GM12878 (cell line): ENCODE measurements at regions of chr1 and their contacts with region 1.

Region 1: DNA sequence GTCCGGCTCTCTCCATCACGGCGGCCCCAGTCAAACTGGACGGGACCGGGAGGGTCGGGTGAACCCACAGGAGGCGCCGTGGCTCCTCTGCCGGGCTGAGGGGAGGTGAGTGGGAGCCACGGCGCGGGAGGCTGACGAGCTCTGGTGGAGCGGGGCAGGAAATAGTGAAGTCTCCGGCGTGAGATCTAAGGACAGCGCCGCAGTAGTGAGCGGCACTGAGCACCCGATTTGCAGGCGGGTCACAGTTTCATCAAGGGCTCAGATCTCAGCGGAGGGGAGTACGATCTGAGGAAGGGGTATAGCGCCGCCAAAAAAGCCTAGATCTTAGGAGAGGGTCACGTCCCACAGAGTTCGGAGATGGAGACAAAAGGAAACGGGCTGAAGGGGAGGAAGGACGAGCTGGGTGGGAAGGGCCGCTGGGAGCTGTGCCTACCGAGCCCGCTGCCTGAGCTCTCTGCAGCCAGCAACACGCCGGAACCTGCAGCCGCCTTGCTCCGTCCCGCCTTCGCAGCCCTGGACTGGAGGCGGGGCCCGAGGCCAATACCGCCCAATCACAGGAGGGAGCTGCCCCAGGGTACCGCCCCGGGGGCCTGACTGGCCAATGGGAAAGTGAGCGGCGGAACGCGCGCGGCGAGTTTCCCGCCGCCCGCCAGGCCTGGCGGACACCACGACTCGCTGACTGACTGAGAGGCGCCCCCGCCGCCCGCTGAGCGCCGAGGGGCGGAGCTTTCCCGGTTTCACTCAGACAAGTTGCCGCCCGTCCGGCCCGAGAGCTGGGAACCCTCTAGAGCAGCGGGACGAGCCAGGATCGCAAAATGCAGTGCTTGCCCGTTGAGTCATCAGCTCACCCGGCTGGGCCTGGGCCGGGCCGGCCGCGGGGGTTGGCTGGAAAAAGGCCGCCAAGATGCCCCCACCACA is 1.9 kb downstream of the SFN start:
- DNase-seq: peak; percentile 91
- ATAC-seq: peak; percentile 96
- H3K4me3 ChIP-seq: peak overlapping the region; percentile 93
- H3K27ac ChIP-seq: peak overlapping the region; percentile 99
- H3K4me1 ChIP-seq: peaks cover 16% of the 10 kb centered on the region
- H3K27me3 ChIP-seq: no peaks in the 10 kb centered on the region
- CTCF ChIP-seq: no peak
- EP300 ChIP-seq: 0 out of 4 replicates have a peak, but pooled peaks of 1 of the 2 experiments have one; percentile 18
- POLR2A ChIP-seq: peak; percentile 98
- RAD21 ChIP-seq: no peak

Region 2: GRCh38 chr1:26391450-26391849 is 473.4 kb before region 1 on chr1:
- CTCF ChIA-PET with region 1: no interaction called
- POLR2A ChIA-PET with region 1: no interaction called
- RAD21 ChIA-PET with region 1: no interaction called
- SMC1A ChIA-PET with region 1: no interaction called
- in situ Hi-C with region 1: no loop called
- intact Hi-C with region 1: no loop called
- DNase-seq: no peak
- ATAC-seq: peak; percentile 80
- H3K4me3 ChIP-seq: no peak overlapping the region
- H3K27ac ChIP-seq: no peak overlapping the region
- H3K4me1 ChIP-seq: no peaks in the 10 kb centered on the region
- H3K27me3 ChIP-seq: no peaks in the 10 kb centered on the region; a peak in 1 of 4 replicates
- CTCF ChIP-seq: peak; percentile 47 to 62 (median 54)
- EP300 ChIP-seq: no peak
- POLR2A ChIP-seq: no peak
- RAD21 ChIP-seq: peak; percentile 57

Region 3: GRCh38 chr1:26826261-26827105 is 38.4 kb before region 1 on chr1 and contains the start of gene ZDHHC18:
- CTCF ChIA-PET with region 1: interaction called, 36 read pairs
- POLR2A ChIA-PET with region 1: interaction called, 56 read pairs
- RAD21 ChIA-PET with region 1: interaction called, 17 read pairs
- SMC1A ChIA-PET with region 1: interaction called, 15 read pairs
- in situ Hi-C with region 1: no loop called
- intact Hi-C with region 1: loop called (anchors 5 kb)
- DNase-seq: no peak
- ATAC-seq: peak; percentile 78
- H3K4me3 ChIP-seq: peak within 1 kb of the TSS; percentile 86
- H3K27ac ChIP-seq: peak within 1 kb of the TSS; percentile 81
- H3K4me1 ChIP-seq: peaks cover 18% of the 10 kb centered on the region
- H3K27me3 ChIP-seq: no peaks in the 10 kb centered on the region
- CTCF ChIP-seq: peak; percentile 31 to 64 (median 54); a peak in 5 of 6 replicates
- EP300 ChIP-seq: no peak
- POLR2A ChIP-seq: peak; percentile 70
- RAD21 ChIP-seq: peak; percentile 18; the same call in 1 of the 2 replicates
- polyA plus RNA-seq, gene ZDHHC18: 0.40 to 1.2 TPM

Region 4: DNA sequence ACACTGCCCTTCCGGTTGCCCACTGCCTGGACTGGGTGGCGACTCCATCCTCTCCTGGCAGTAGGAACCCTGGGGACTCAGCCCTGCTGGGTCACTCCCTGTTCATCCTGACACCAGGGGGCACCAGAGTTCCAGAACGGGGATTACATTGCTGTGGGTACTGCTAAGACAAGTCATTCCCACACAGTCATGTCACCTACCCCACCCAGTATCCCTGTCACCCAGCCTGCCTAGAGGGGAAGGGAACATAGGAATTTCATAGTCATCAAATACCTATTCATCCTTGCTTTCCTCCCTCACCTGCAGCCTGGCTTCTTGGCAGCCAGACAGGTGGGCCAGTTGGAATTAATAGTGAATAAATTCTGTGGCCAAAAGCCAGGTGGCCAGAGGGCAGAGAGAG is 11.7 kb before region 1 on chr1:
- CTCF ChIA-PET with region 1: interaction called, 11 read pairs
- POLR2A ChIA-PET with region 1: interaction called, 6 read pairs
- RAD21 ChIA-PET with region 1: interaction called, 7 read pairs
- SMC1A ChIA-PET with region 1: interaction called, 4 read pairs
- in situ Hi-C with region 1: no loop called
- intact Hi-C with region 1: no loop called
- DNase-seq: no peak
- ATAC-seq: peak; percentile 98
- H3K4me3 ChIP-seq: no peak overlapping the region
- H3K27ac ChIP-seq: no peak overlapping the region
- H3K4me1 ChIP-seq: no peaks in the 10 kb centered on the region
- H3K27me3 ChIP-seq: no peaks in the 10 kb centered on the region
- CTCF ChIP-seq: peak; percentile 77 to 83 (median 82)
- EP300 ChIP-seq: no peak
- POLR2A ChIP-seq: 0 out of 2 replicates have a peak, but pooled peaks have one; percentile 24
- RAD21 ChIP-seq: peak; percentile 75

Region 5: GRCh38 chr1:26882696-26883463 is 18.0 kb after region 1 on chr1:
- CTCF ChIA-PET with region 1: interaction called, 29 read pairs
- POLR2A ChIA-PET with region 1: interaction called, 3 read pairs
- RAD21 ChIA-PET with region 1: interaction called, 5 read pairs
- SMC1A ChIA-PET with region 1: interaction called, 14 read pairs
- in situ Hi-C with region 1: no loop called
- intact Hi-C with region 1: no loop called
- DNase-seq: no peak
- ATAC-seq: no peak
- H3K4me3 ChIP-seq: no peak overlapping the region
- H3K27ac ChIP-seq: no peak overlapping the region
- H3K4me1 ChIP-seq: no peaks in the 10 kb centered on the region
- H3K27me3 ChIP-seq: no peaks in the 10 kb centered on the region
- CTCF ChIP-seq: no peak
- EP300 ChIP-seq: no peak
- POLR2A ChIP-seq: no peak
- RAD21 ChIP-seq: no peak

Region 6: GRCh38 chr1:27267153-27267552 is 402.3 kb after region 1 on chr1:
- CTCF ChIA-PET with region 1: no interaction called
- POLR2A ChIA-PET with region 1: no interaction called
- RAD21 ChIA-PET with region 1: no interaction called
- SMC1A ChIA-PET with region 1: no interaction called
- in situ Hi-C with region 1: no loop called
- intact Hi-C with region 1: no loop called
- DNase-seq: no peak
- ATAC-seq: no peak
- H3K4me3 ChIP-seq: no peak overlapping the region
- H3K27ac ChIP-seq: no peak overlapping the region
- H3K4me1 ChIP-seq: no peaks in the 10 kb centered on the region
- H3K27me3 ChIP-seq: no peaks in the 10 kb centered on the region
- CTCF ChIP-seq: no peak
- EP300 ChIP-seq: no peak
- POLR2A ChIP-seq: no peak
- RAD21 ChIP-seq: no peak